ENCODE measurements at regions of chr13 and their contacts with region 1.

Region 1: GRCh38 chr13:53778937-53779336 is 750.3 kb downstream of the OLFM4 start:
- DNase-seq: no peak
- H3K4me3 ChIP-seq: no peak overlapping the region
- H3K27ac ChIP-seq: no peak overlapping the region
- H3K4me1 ChIP-seq: no peaks in the 10 kb centered on the region
- H3K27me3 ChIP-seq: no peaks in the 10 kb centered on the region
- CTCF ChIP-seq: no peak

Region 2: DNA sequence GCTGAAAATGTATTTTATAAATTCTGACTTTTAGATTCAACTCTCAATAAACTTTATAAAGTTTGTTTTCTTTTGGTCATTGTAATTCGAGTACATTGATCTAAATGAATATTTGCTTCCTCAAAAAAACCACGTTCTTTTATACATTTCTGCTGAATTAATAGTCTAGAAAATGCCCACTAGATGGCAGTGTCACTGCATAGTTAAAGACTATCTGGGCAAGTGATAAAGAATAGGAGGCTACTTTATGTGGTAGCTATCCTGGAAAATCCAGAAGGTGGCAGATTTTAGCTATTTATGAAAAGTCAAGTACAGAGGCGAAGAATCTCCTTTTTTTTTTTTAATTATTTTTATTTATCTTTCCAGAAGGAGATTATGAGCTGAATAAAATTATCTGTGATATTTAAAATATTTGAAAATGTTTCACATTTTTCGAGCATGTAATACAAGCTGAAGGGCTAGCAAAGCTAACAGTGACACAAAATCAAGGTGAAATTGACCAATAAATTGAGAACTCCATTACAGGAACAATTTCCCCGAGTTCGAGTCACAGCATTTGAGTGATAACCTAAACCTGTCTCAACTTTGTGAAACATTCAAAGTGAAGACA is 528.6 kb before region 1 on chr13:
- intact Hi-C with region 1: loop called (anchors 10 kb)
- DNase-seq: peak; percentile 28
- H3K4me3 ChIP-seq: no peak overlapping the region
- H3K27ac ChIP-seq: no peak overlapping the region
- H3K4me1 ChIP-seq: no peaks in the 10 kb centered on the region
- H3K27me3 ChIP-seq: no peaks in the 10 kb centered on the region
- CTCF ChIP-seq: peak; percentile 63

Region 3: DNA sequence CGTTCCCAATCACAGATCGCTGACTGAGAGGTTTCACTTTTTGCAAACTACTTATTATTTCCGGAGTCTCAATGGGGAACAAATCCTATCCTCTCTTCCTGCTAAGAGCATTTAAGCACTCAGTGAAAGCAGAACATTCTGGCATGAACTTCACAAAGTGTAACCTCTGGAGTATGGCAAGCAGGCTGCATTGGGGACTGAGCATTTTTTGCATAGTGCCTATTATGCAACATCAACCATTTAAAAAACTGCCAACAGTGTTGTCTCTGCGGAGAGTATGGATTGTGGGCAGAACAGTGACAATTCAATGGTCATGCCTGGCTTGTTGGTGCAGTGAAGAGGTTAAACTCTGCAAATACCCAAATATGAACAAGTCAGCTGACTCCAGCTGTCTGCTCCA is 265.7 kb before region 1 on chr13:
- intact Hi-C with region 1: no loop called
- DNase-seq: no peak
- H3K4me3 ChIP-seq: no peak overlapping the region
- H3K27ac ChIP-seq: no peak overlapping the region
- H3K4me1 ChIP-seq: no peaks in the 10 kb centered on the region
- H3K27me3 ChIP-seq: no peaks in the 10 kb centered on the region
- CTCF ChIP-seq: no peak

Region 4: GRCh38 chr13:53719281-53719680 is 59.7 kb before region 1 on chr13:
- intact Hi-C with region 1: no loop called
- DNase-seq: no peak
- H3K4me3 ChIP-seq: no peak overlapping the region
- H3K27ac ChIP-seq: no peak overlapping the region
- H3K4me1 ChIP-seq: no peaks in the 10 kb centered on the region
- H3K27me3 ChIP-seq: no peaks in the 10 kb centered on the region
- CTCF ChIP-seq: no peak

Region 5: GRCh38 chr13:53848366-53848961 is 69.5 kb after region 1 on chr13:
- intact Hi-C with region 1: no loop called
- DNase-seq: no peak
- H3K4me3 ChIP-seq: no peak overlapping the region
- H3K27ac ChIP-seq: no peak overlapping the region
- H3K4me1 ChIP-seq: no peaks in the 10 kb centered on the region
- H3K27me3 ChIP-seq: no peaks in the 10 kb centered on the region
- CTCF ChIP-seq: no peak

Measured in colonic mucosa (tissue), 4 donors.